ENCODE measurements at regions of chr1 and their contacts with region 1.

Region 1: GRCh38 chr1:227952374-227953021 is 4.8 kb upstream of the WNT9A start:
- H3K4me3 ChIP-seq: no peak overlapping the region
- H3K27ac ChIP-seq: no peak overlapping the region
- H3K4me1 ChIP-seq: 0 out of 2 replicates have a peak, but pooled peaks cover 4% of the 10 kb centered on the region
- CTCF ChIP-seq: no peak

Region 2: DNA sequence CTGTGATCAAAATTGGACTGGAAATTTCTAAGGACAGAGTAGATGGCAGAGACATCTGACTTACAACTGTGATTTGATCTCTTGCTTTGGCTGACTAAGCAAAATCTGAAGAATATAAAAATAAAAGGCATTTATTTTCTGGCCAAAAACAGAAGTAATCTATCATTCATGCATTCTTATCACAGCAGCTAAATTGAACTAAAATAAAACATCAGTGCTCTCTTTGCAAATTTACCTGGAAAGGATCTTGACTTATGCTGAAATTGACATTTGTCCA is 470.5 kb before region 1 on chr1:
- CTCF ChIA-PET with region 1: interaction called, 25 read pairs
- POLR2A ChIA-PET with region 1: interaction called, 3 read pairs
- H3K4me3 ChIP-seq: no peak overlapping the region
- H3K27ac ChIP-seq: no peak overlapping the region
- H3K4me1 ChIP-seq: no peaks in the 10 kb centered on the region
- CTCF ChIP-seq: no peak

Region 3: GRCh38 chr1:227729881-227730627 is 222.4 kb before region 1 on chr1:
- CTCF ChIA-PET with region 1: interaction called, 6 read pairs
- POLR2A ChIA-PET with region 1: interaction called, 10 read pairs
- H3K4me3 ChIP-seq: no peak overlapping the region
- H3K27ac ChIP-seq: no peak overlapping the region
- H3K4me1 ChIP-seq: peaks cover 21% of the 10 kb centered on the region
- CTCF ChIP-seq: peak; percentile 62; the same call in 1 of the 2 replicates

Region 4: DNA sequence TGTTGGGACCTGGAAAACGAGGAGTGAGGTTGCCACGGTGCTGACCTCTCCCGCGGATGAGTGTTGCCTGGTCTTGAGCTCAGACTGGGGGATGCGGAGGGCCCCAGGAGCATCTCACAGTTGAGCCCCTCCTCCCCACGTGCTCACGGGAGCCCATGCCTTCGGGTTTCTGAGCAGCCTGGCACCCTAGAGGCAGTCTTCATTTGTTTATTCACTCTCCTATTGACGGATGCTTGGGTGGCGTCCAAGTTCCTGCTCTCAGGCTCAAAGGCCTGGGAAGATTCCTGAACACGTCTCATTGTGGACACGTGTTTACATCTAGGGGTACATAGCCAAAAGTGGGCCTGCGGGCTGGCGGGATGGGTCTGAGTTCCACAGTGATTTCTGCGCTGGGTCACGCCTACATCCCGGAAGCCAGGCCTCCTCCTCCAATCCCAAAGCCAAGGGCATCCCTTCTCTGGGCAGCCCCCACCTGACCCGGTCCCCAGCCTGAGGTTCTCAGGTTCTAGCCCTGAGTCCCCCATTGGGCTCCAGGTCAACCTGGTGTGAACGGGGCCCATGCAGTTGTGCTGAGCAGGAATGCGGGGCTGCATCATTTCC is 69.0 kb after region 1 on chr1:
- CTCF ChIA-PET with region 1: no interaction called
- POLR2A ChIA-PET with region 1: no interaction called
- H3K4me3 ChIP-seq: no peak overlapping the region
- H3K27ac ChIP-seq: no peak overlapping the region
- H3K4me1 ChIP-seq: no peaks in the 10 kb centered on the region
- CTCF ChIP-seq: no peak

Measured in HEK293 (cell line).